ENCODE measurements at regions of chr18 and their contacts with region 1.

Region 1: GRCh38 chr18:43587538-43588153 is 310.4 kb upstream of the SYT4 start:
- DNase-seq: peak; percentile 3
- H3K4me3 ChIP-seq: no peak overlapping the region
- H3K27ac ChIP-seq: no peak overlapping the region
- H3K4me1 ChIP-seq: no peaks in the 10 kb centered on the region
- CTCF ChIP-seq: peak; percentile 72

Region 2: GRCh38 chr18:43571078-43571689 is 16.5 kb before region 1 on chr18:
- CTCF ChIA-PET with region 1: no interaction called
- POLR2A ChIA-PET with region 1: interaction called, 4 read pairs
- intact Hi-C with region 1: loop called (anchors 2 kb)
- DNase-seq: peak; percentile 14
- H3K4me3 ChIP-seq: no peak overlapping the region
- H3K27ac ChIP-seq: no peak overlapping the region
- H3K4me1 ChIP-seq: no peaks in the 10 kb centered on the region
- CTCF ChIP-seq: peak; percentile 80

Measured in OCI-LY7 (cell line).